ENCODE measurements at regions of chr16 and their contacts with region 1.

Region 1: GRCh38 chr16:56851671-56852400 is 13.2 kb upstream of the SLC12A3 start:
- DNase-seq: peak in 1 of 2 experiments; percentile 44
- ATAC-seq: peak in 1 of 2 experiments; percentile 24; a peak in 3 of 6 replicates
- H3K4me3 ChIP-seq: no peak overlapping the region
- H3K27ac ChIP-seq: peak overlapping the region; percentile 1 to 68; a peak in 3 of 6 replicates
- H3K4me1 ChIP-seq: peaks cover 50% of the 10 kb centered on the region
- CTCF ChIP-seq: peak; percentile 41
- EP300 ChIP-seq: no peak
- POLR2A ChIP-seq: no peak
- RAD21 ChIP-seq: peak; percentile 39 to 50; a peak in 3 of 5 replicates

Region 2: GRCh38 chr16:56841233-56841632 is 10.6 kb before region 1 on chr16:
- CTCF ChIA-PET with region 1: interaction called, 18 read pairs
- POLR2A ChIA-PET with region 1: no interaction called
- DNase-seq: no peak
- ATAC-seq: no peak; a peak in 1 of 6 replicates
- H3K4me3 ChIP-seq: no peak overlapping the region
- H3K27ac ChIP-seq: no peak overlapping the region
- H3K4me1 ChIP-seq: no peaks in the 10 kb centered on the region
- CTCF ChIP-seq: no peak
- EP300 ChIP-seq: no peak
- POLR2A ChIP-seq: no peak
- RAD21 ChIP-seq: no peak

Region 3: GRCh38 chr16:56888806-56889205 is 37.0 kb after region 1 on chr16:
- CTCF ChIA-PET with region 1: no interaction called
- POLR2A ChIA-PET with region 1: no interaction called
- DNase-seq: no peak
- ATAC-seq: no peak
- H3K4me3 ChIP-seq: no peak overlapping the region
- H3K27ac ChIP-seq: no peak overlapping the region
- H3K4me1 ChIP-seq: no peaks in the 10 kb centered on the region
- CTCF ChIP-seq: no peak
- EP300 ChIP-seq: no peak
- POLR2A ChIP-seq: no peak
- RAD21 ChIP-seq: no peak

Measured in A549 (cell line).